Heart left ventricle (tissue), 16 donors: ENCODE measurements at regions of chr2 and their contacts with region 1.

Region 1: DNA sequence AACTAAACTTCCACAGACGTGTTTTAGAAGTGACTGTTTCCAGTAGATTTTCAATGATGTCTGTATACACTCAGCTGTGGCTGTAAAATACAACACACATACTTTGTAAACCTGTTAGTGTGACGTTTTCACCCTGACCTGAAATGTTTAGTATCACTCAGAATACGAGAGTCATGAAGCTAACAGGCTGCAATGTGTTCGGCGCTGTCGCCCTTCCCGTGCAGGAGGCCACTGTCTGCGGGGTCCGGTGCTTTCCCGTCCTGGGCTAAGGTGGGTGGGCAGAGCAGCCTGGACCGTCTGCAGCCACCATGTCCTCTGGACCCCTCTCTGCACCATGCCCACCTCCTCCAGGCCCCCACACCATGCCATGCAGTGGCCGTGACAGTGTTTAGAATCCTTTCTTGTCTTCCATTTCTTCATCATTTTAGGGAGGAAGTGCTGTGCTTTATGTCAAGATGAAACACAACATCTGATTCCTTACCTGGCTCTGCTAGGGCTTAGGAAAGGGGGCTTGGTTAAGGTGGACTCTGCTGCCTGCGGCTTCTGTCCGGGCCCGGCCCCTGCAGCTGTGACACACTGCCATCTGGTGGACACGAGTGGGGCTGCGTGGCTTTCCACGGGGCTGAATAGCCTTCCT is 53.8 kb upstream of the RBM44 start:
- DNase-seq: peak; percentile 71 to 90 (median 76)
- ATAC-seq: peak; percentile 79 to 86 (median 82)
- H3K4me3 ChIP-seq: no peak overlapping the region
- H3K27ac ChIP-seq: peak overlapping the region in 7 of 12 donors; percentile 17 to 56 (median 23)
- H3K4me1 ChIP-seq: peaks cover 0 to 57% (median 46%) of the 10 kb centered on the region in 12 donors
- H3K27me3 ChIP-seq: no peaks in the 10 kb centered on the region
- CTCF ChIP-seq: peak; percentile 98 to 100 (median 99)
- POLR2A ChIP-seq: no peak

Region 2: GRCh38 chr2:237581751-237582746 is 162.7 kb before region 1 on chr2:
- intact Hi-C with region 1: loop called (anchors 1 to 5 kb)
- DNase-seq: peak; percentile 82 to 92 (median 83)
- ATAC-seq: peak; percentile 89 to 94 (median 92)
- H3K4me3 ChIP-seq: peak overlapping the region in 5 of 12 donors; percentile 10 to 40 (median 29)
- H3K27ac ChIP-seq: peak overlapping the region; percentile 19 to 89 (median 84)
- H3K4me1 ChIP-seq: peaks cover 0 to 27% (median 17%) of the 10 kb centered on the region in 12 donors
- H3K27me3 ChIP-seq: no peaks in the 10 kb centered on the region
- CTCF ChIP-seq: peak; percentile 19 to 83 (median 62)
- POLR2A ChIP-seq: no peak

Region 3: GRCh38 chr2:237596520-237596860 is 148.2 kb before region 1 on chr2:
- intact Hi-C with region 1: loop called in 7 of 10 experiments (anchors 5 kb)
- DNase-seq: no peak
- ATAC-seq: no peak
- H3K4me3 ChIP-seq: no peak overlapping the region
- H3K27ac ChIP-seq: peak overlapping the region in 4 of 12 donors; percentile 10 to 50 (median 30)
- H3K4me1 ChIP-seq: peaks cover 0 to 45% (median 24%) of the 10 kb centered on the region in 12 donors
- H3K27me3 ChIP-seq: no peaks in the 10 kb centered on the region
- CTCF ChIP-seq: no peak
- POLR2A ChIP-seq: no peak

Region 4: DNA sequence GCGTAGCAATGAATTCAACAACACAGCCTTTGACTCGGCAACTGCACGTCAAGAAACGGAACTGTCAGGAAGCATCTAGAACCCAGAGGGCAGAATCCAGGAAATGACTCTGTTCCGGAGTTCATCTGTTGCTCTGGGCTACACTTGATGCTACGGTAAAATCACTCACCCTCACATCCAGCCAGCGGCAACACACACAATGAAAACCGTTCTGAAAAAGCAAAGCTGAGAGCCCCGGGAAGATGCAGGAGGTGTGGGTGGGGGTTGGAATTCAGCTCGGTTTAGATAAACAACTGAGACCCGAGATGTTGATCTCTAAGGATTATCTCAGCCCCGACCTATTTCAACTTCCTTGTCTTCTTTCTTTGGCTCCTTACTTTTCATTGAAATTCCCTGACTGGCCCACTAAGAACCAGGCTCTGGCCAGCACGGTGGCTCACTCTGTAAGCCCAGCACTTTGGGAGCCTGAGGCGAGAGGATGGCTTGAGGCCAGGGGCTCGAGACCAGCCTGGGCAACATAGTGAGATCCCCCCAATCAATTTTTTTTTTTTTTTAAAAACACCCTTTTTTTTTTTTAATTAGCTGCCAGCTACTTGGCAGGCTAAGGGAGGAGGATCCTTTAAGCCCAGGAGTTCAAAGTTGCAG is 140.9 kb before region 1 on chr2:
- intact Hi-C with region 1: loop called in 7 of 10 experiments (anchors 5 kb)
- DNase-seq: peak in 2 of 5 donors; percentile 54 to 63
- ATAC-seq: peak in 3 of 4 donors; percentile 21 to 70 (median 56)
- H3K4me3 ChIP-seq: peak overlapping the region in 3 of 12 donors; percentile 8 to 15 (median 12)
- H3K27ac ChIP-seq: peak overlapping the region in 7 of 12 donors; percentile 17 to 57 (median 30)
- H3K4me1 ChIP-seq: peaks cover 0 to 41% (median 28%) of the 10 kb centered on the region in 12 donors
- H3K27me3 ChIP-seq: no peaks in the 10 kb centered on the region
- CTCF ChIP-seq: no peak
- POLR2A ChIP-seq: no peak

Region 5: GRCh38 chr2:237674731-237675276 is 69.9 kb before region 1 on chr2:
- intact Hi-C with region 1: loop called (anchors 1 to 2 kb)
- DNase-seq: peak; percentile 89 to 92 (median 91)
- ATAC-seq: peak; percentile 79 to 90 (median 84)
- H3K4me3 ChIP-seq: peak overlapping the region in 9 of 12 donors; percentile 4 to 44 (median 24)
- H3K27ac ChIP-seq: peak overlapping the region; percentile 24 to 90 (median 78)
- H3K4me1 ChIP-seq: peaks cover 28 to 91% (median 77%) of the 10 kb centered on the region in 12 donors
- H3K27me3 ChIP-seq: no peaks in the 10 kb centered on the region
- CTCF ChIP-seq: peak in 6 of 12 donors; percentile 6 to 21 (median 10)
- POLR2A ChIP-seq: peak in 1 of 2 donors; percentile 39

Region 6: GRCh38 chr2:237691908-237692600 is 52.7 kb before region 1 on chr2:
- intact Hi-C with region 1: loop called in 4 of 10 experiments (anchors 5 kb)
- DNase-seq: peak; percentile 96 to 99 (median 97)
- ATAC-seq: peak; percentile 53 to 84 (median 74)
- H3K4me3 ChIP-seq: peak overlapping the region; percentile 60 to 98 (median 86)
- H3K27ac ChIP-seq: peak overlapping the region; percentile 80 to 98 (median 92)
- H3K4me1 ChIP-seq: peaks cover 13 to 91% (median 78%) of the 10 kb centered on the region in 12 donors
- H3K27me3 ChIP-seq: no peaks in the 10 kb centered on the region
- CTCF ChIP-seq: peak in 2 of 12 donors; percentile 10 to 11
- POLR2A ChIP-seq: peak in 1 of 2 donors; percentile 54

Region 7: DNA sequence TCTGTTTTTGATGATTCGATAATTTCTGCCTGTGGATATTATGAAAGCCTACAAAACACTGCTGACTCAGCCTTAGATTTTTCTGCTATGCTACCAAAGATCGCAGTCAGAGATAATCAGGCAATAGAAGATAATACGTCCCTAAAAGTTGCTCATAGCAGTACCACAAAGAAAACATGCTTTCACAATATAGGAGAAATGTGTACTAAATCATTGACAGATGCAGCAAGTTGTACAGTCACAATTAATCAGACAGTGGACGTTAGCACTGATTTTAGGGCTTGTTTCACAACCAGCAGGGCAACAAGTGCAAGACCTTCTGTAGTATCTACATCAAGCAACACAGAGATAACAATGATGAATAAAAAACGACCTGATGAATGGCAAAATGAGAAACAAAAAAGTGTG is 73.3 kb after region 1 on chr2:
- intact Hi-C with region 1: no loop called
- DNase-seq: no peak
- ATAC-seq: no peak
- H3K4me3 ChIP-seq: no peak overlapping the region
- H3K27ac ChIP-seq: no peak overlapping the region
- H3K4me1 ChIP-seq: peaks cover 0 to 4% (median 0%) of the 10 kb centered on the region in 12 donors
- H3K27me3 ChIP-seq: no peaks in the 10 kb centered on the region
- CTCF ChIP-seq: no peak
- POLR2A ChIP-seq: no peak

Region 8: DNA sequence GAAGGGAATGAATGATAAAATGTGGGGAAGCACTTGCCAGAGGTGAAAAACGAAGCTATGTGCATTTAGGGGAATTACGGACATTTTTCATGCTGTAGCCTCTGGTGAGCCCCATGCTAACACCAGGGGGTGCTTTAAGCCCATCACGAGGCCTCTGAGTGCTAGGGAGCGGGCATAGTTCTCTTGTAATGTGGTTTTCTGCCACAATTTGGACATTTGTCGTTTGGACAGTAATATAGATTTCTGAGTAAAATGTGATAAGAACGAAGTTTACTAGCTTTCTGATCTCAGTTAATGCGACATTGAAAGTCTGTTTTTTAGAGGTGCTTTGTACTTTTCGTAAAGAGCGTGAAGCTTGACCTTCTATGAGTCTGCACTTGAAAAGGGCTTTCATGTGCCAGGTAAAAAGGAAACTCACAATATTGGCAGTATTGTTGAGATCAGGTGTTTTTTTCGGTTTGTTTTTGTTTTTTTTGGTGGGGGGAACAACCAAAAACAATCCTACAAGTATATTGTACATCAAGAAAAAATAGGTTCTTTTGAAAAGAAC is 626.2 kb after region 1 on chr2:
- intact Hi-C with region 1: no loop called
- DNase-seq: peak; percentile 46 to 72 (median 53)
- ATAC-seq: peak; percentile 83 to 97 (median 94)
- H3K4me3 ChIP-seq: no peak overlapping the region
- H3K27ac ChIP-seq: no peak overlapping the region
- H3K4me1 ChIP-seq: no peaks in the 10 kb centered on the region
- H3K27me3 ChIP-seq: no peaks in the 10 kb centered on the region
- CTCF ChIP-seq: peak; percentile 34 to 85 (median 78)
- POLR2A ChIP-seq: no peak